ENCODE measurements at regions of chr3 and their contacts with region 1.

Region 1: GRCh38 chr3:43162230-43163084 is 56.6 kb upstream of the POMGNT2 start:
- DNase-seq: peak; percentile 69
- H3K4me3 Mint-ChIP-seq: peak overlapping the region; percentile 58
- H3K27ac Mint-ChIP-seq: peak overlapping the region; percentile 69
- H3K4me1 Mint-ChIP-seq: peaks cover 18% of the 10 kb centered on the region
- H3K27me3 Mint-ChIP-seq: no peaks in the 10 kb centered on the region

Region 2: DNA sequence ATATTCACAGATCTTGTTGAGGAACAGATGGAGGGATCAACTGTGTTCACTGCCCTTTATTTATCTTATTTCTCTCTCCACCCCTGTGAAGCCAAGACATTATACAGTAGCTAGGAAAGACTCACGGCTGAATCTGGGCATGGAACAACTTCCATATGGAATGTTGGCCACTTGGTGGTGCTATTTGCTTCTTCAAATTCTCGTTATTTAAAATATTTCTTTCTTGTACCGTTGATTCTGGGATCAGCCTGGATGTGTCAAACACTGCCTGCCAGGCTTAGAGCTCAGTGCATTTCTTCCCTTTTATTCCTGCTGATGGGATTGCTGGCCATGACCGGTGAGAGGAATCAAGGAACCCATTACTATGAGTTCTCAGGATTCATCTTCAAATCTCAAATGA is 200.8 kb before region 1 on chr3:
- CTCF ChIA-PET with region 1: interaction called, 20 read pairs
- intact Hi-C with region 1: loop called (anchors 5 kb)
- DNase-seq: peak; percentile 50
- H3K4me3 Mint-ChIP-seq: no peak overlapping the region
- H3K27ac Mint-ChIP-seq: no peak overlapping the region
- H3K4me1 Mint-ChIP-seq: peaks cover 20% of the 10 kb centered on the region
- H3K27me3 Mint-ChIP-seq: no peaks in the 10 kb centered on the region

Region 3: DNA sequence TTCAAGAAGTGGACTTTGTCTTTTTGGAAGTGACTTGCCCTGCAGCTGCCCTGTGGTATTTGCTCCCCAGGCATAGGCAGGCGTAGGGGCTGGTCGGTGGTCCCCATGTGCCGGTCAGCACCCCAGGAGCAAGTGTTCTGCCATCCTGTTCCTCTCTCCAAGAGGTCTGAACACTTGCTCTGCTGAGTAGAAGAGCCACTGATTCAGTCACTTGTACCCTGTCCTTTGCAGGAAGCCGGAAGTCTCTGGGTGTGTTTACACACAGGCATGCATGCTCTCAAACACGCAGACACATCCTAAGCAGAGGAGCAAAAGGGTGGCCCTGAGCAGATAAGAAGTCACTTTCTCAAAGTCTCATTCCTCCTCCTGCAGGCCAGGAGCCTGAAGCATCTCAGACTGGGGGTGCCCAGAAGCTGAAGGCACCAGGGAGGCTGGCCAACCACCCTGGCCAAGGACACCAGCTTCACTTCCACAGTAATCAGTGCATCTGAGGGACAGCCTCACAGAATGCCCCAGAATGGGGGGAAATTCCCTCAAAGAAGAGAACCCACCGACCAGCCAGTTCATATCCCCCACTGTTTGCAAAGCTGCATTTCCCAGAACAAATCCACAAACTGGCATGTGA is 32.1 kb after region 1 on chr3:
- CTCF ChIA-PET with region 1: interaction called, 3 read pairs
- intact Hi-C with region 1: loop called (anchors 1 kb)
- DNase-seq: peak; percentile 66
- H3K4me3 Mint-ChIP-seq: peak overlapping the region; percentile 5
- H3K27ac Mint-ChIP-seq: peak overlapping the region; percentile 82
- H3K4me1 Mint-ChIP-seq: peaks cover 80% of the 10 kb centered on the region
- H3K27me3 Mint-ChIP-seq: no peaks in the 10 kb centered on the region

Region 4: GRCh38 chr3:43286115-43286840 is 123.8 kb after region 1 on chr3 and contains the start of gene SNRK:
- CTCF ChIA-PET with region 1: interaction called, 5 read pairs
- intact Hi-C with region 1: loop called (anchors 2 kb)
- DNase-seq: peak; percentile 91
- H3K4me3 Mint-ChIP-seq: peak within 1 kb of the TSS; percentile 91
- H3K27ac Mint-ChIP-seq: peak within 1 kb of the TSS; percentile 93
- H3K4me1 Mint-ChIP-seq: peaks cover 33% of the 10 kb centered on the region
- H3K27me3 Mint-ChIP-seq: no peaks in the 10 kb centered on the region
- total RNA-seq, gene SNRK: 21.1 TPM

Region 5: DNA sequence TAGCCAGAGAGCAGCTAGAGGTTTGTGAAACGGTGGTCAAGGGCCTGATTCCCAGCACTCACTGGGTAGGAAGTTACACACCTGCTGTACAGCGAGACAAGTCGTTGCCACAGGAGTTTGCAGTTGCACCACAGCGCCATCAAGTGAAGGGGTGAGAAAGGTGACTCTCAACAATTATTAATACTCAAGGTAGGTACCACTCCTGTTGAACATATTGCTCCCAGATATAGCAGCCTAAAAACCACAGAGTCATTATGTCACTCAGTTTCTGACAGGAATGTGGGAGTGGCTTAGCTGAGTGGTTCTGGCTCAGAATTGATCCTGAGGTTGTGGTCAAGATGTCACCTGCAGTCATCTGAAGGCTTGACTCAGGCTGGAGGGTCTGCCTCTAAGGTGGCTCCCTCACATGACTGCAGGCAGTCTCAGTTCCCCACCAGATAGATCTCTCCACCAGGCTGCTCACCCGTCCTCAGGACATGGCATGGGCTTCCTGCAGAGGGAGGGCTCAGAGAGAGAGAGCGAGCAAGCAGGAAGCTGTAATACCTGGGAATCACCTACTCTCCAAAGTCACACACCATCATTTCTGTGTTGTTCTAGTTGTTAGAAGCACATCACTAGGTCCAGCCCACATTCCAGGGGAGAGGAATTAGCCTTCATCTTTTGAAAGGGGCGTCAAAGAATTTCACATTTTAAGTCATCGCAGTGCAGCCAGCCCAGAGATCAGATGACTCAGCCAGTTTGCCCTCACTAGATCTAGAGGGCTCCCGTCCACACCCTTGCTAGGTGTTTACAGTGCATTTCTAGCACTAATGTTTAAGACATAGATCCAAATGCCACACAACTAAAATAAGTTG is 476.4 kb after region 1 on chr3:
- CTCF ChIA-PET with region 1: no interaction called
- intact Hi-C with region 1: loop called (anchors 1 kb)
- DNase-seq: peak; percentile 77
- H3K4me3 Mint-ChIP-seq: no peak overlapping the region
- H3K27ac Mint-ChIP-seq: no peak overlapping the region
- H3K4me1 Mint-ChIP-seq: peaks cover 7% of the 10 kb centered on the region
- H3K27me3 Mint-ChIP-seq: peaks cover under 1% of the 10 kb centered on the region

Region 6: DNA sequence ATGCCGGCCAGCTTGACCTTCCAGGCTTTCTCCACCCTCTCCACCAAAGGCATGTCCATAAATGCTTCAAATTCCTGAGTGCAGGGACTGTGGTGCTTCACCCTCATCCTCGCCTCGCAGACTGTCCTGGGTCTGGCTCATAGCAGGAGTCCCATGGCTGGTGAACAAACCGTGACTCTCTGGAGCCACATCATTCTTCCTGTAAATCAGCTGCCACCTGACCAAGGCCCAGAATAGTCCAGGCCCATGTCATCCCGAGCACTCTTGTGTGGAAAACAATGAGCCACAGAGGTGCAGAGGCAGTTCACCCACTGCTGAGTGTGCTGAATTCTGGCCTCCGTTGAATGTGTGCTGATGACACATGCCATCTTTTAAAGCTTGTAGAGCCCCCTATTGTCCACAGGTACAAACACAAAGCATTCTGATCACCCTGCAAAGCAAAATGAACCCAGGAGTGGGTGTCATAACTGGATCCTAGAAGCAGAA is 596.9 kb after region 1 on chr3:
- CTCF ChIA-PET with region 1: no interaction called
- intact Hi-C with region 1: loop called (anchors 2 kb)
- DNase-seq: peak; percentile 17
- H3K4me3 Mint-ChIP-seq: no peak overlapping the region
- H3K27ac Mint-ChIP-seq: no peak overlapping the region
- H3K4me1 Mint-ChIP-seq: peaks cover 46% of the 10 kb centered on the region
- H3K27me3 Mint-ChIP-seq: no peaks in the 10 kb centered on the region

Measured in activated naive CD4-positive, alpha-beta T cell treated with anti-CD3 and anti-CD28 coated beads for 36 hours (primary cell).